B cell (primary cell): ENCODE measurements at regions of chr12 and their contacts with region 1.

Region 1: DNA sequence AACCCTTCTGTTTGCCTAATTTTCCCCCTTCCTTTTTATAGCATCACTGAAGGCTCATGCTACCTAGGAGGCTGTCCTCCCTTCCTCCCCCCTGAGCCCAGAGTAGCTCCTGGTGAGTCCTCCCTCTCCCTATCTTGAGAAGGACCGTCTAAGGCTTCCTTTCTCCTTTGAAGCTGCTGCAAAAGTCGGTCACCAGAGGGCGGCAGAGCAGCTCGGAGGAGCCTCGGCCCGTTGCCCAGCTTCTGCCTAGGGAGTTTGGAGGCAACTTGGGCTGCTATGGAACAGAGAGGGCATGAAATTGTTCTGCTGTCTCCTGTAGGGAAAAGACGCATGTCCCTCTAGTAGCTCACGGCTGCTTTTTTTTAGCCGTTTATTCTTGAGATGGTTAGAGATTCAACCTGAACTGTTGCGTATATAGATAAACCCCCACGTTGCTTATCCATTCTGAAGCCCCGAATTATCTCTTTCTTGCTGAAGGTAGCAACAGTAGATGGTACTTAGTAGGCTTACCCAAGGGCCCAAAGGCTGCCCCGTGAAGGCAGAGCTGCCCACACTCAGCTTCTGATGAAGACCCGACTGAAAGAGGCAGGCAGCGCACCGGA is 5.7 kb downstream of the WNT5B start:
- DNase-seq: peak; percentile 69
- ATAC-seq: peak; percentile 50
- H3K4me3 ChIP-seq: no peak overlapping the region
- H3K4me3 Mint-ChIP-seq: no peak overlapping the region
- H3K27ac ChIP-seq: no peak overlapping the region
- H3K27ac Mint-ChIP-seq: no peak overlapping the region
- H3K4me1 ChIP-seq: peaks cover 19 to 20% of the 10 kb centered on the region in 2 donors
- H3K4me1 Mint-ChIP-seq: peaks cover 19% of the 10 kb centered on the region
- H3K27me3 ChIP-seq: peaks cover 0 to 52% (median 31%) of the 10 kb centered on the region in 4 experiments
- H3K27me3 Mint-ChIP-seq: peaks cover 30% of the 10 kb centered on the region
- CTCF ChIP-seq: peak; percentile 91

Region 2: DNA sequence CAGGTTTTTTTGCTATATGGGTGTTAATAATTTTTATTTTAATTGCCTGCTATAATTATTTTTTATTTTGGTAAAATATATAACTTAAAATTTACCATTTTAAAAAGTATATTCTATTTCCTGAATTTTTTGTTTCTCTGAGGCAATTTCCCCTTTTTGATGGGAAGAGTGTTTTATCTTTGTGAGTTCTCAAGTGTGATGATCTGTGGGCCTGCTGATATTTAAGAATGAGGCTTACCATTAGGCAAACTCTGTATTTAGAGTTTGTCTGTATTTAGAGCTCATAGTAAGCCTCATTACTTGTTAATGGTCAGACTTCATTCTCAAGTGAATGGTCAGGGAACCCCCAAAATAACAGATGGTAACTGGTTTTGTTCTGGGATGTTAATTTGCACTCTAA is 834.3 kb before region 1 on chr12:
- CTCF ChIA-PET with region 1: no interaction called
- POLR2A ChIA-PET with region 1: no interaction called
- intact Hi-C with region 1: no loop called
- DNase-seq: no peak
- ATAC-seq: no peak
- H3K4me3 ChIP-seq: no peak overlapping the region
- H3K4me3 Mint-ChIP-seq: no peak overlapping the region
- H3K27ac ChIP-seq: no peak overlapping the region
- H3K27ac Mint-ChIP-seq: peak overlapping the region; percentile 38
- H3K4me1 ChIP-seq: peaks cover 21 to 33% of the 10 kb centered on the region in 2 donors
- H3K4me1 Mint-ChIP-seq: peaks cover 57% of the 10 kb centered on the region
- H3K27me3 ChIP-seq: no peaks in the 10 kb centered on the region
- H3K27me3 Mint-ChIP-seq: no peaks in the 10 kb centered on the region
- CTCF ChIP-seq: no peak

Region 3: GRCh38 chr12:1559676-1560091 is 75.0 kb before region 1 on chr12:
- CTCF ChIA-PET with region 1: no interaction called
- POLR2A ChIA-PET with region 1: no interaction called
- intact Hi-C with region 1: no loop called
- DNase-seq: no peak
- ATAC-seq: no peak
- H3K4me3 ChIP-seq: no peak overlapping the region
- H3K4me3 Mint-ChIP-seq: no peak overlapping the region
- H3K27ac ChIP-seq: no peak overlapping the region
- H3K27ac Mint-ChIP-seq: no peak overlapping the region
- H3K4me1 ChIP-seq: peaks cover 0 to 2% of the 10 kb centered on the region in 2 donors
- H3K4me1 Mint-ChIP-seq: peaks cover 3% of the 10 kb centered on the region
- H3K27me3 ChIP-seq: no peaks in the 10 kb centered on the region
- H3K27me3 Mint-ChIP-seq: no peaks in the 10 kb centered on the region
- CTCF ChIP-seq: no peak

Region 4: DNA sequence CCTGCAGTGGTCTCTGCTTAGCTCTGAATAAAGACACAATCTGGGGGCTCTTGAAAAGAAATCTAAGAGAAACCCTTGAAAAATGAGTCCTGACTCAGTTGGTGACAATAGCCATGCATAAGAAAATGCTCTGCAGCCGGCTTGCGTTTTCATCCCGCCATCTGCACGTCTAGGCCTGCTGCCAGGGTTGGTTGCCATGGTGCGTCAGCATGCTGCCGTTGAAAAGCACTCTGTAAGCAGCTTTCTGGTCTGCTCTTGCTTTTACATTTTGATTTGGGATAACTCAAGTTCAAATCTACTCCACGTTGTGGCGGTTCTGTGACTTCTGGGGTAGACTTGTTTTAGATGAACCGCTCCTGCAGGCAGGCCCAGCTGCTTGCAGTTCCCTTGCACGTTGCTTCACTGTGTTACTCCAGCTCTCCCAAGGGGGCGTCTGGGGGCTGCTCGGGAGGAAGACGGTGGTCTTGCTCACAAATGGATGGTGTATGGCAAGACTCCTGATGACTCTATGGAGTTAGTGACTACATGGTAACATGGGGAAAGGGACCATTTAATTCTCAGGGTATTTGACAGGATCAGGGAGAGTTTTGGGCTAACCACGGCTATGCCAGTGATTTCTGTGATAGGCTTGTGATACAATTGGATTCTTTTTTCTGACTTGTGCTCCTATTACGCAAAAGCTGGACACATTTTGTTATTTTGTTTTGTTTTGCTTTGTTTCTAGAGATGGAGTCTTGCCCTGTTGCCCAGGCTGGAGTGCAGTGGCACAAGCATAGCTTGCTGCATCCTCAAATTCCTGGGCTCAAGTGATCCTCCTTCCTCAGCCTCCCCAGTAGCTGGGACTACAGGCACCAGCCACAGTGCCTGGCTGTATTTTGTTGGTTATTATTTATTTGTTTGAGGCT is 10.1 kb after region 1 on chr12:
- CTCF ChIA-PET with region 1: interaction called, 16 read pairs
- POLR2A ChIA-PET with region 1: no interaction called
- intact Hi-C with region 1: no loop called
- DNase-seq: no peak
- ATAC-seq: no peak
- H3K4me3 ChIP-seq: no peak overlapping the region
- H3K4me3 Mint-ChIP-seq: no peak overlapping the region
- H3K27ac ChIP-seq: no peak overlapping the region
- H3K27ac Mint-ChIP-seq: no peak overlapping the region
- H3K4me1 ChIP-seq: peaks cover 0 to 14% of the 10 kb centered on the region in 2 donors
- H3K4me1 Mint-ChIP-seq: peaks cover 11% of the 10 kb centered on the region
- H3K27me3 ChIP-seq: no peaks in the 10 kb centered on the region
- H3K27me3 Mint-ChIP-seq: peaks cover 27% of the 10 kb centered on the region
- CTCF ChIP-seq: no peak